ENCODE measurements at regions of chr7 and their contacts with region 1.

Region 1: GRCh38 chr7:51034521-51035264 is 252.0 kb upstream of the GRB10 start:
- DNase-seq: no peak
- H3K4me3 ChIP-seq: no peak overlapping the region
- H3K27ac ChIP-seq: no peak overlapping the region
- H3K4me1 ChIP-seq: no peaks in the 10 kb centered on the region
- H3K27me3 ChIP-seq: no peaks in the 10 kb centered on the region
- CTCF ChIP-seq: no peak
- POLR2A ChIP-seq: no peak

Region 2: GRCh38 chr7:50138101-50138500 is 896.6 kb before region 1 on chr7:
- intact Hi-C with region 1: no loop called
- DNase-seq: no peak
- H3K4me3 ChIP-seq: no peak overlapping the region
- H3K27ac ChIP-seq: no peak overlapping the region
- H3K4me1 ChIP-seq: no peaks in the 10 kb centered on the region
- H3K27me3 ChIP-seq: no peaks in the 10 kb centered on the region
- CTCF ChIP-seq: no peak
- POLR2A ChIP-seq: no peak

Region 3: GRCh38 chr7:51162724-51163329 is 128.1 kb after region 1 on chr7:
- intact Hi-C with region 1: no loop called
- DNase-seq: peak; percentile 73 to 92 (median 82)
- H3K4me3 ChIP-seq: no peak overlapping the region
- H3K27ac ChIP-seq: no peak overlapping the region
- H3K4me1 ChIP-seq: no peaks in the 10 kb centered on the region
- H3K27me3 ChIP-seq: no peaks in the 10 kb centered on the region
- CTCF ChIP-seq: peak; percentile 70 to 87 (median 74)
- POLR2A ChIP-seq: no peak

Region 4: DNA sequence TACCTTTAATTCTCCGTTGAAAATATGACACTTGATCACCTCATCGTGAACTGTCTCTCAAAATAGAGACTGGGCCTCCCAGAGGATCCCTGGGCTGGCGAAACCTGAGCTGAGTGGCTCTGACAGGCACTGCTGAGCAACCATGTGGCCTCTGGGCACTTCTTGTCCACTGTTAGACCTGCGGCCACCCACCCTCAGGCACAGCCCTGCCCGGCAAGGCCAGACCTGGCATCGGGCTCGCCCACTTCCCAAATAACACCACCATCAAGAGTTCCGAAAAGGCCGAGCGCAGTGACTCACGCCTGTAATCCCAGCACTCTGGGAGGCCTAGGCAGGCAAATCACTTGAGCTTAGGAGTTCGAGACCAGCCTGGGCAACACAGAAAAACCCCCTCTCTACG is 199.4 kb after region 1 on chr7:
- intact Hi-C with region 1: loop called in 1 of 2 experiments (anchors 10 kb)
- DNase-seq: peak in 1 of 7 donors; percentile 39
- H3K4me3 ChIP-seq: no peak overlapping the region
- H3K27ac ChIP-seq: no peak overlapping the region
- H3K4me1 ChIP-seq: no peaks in the 10 kb centered on the region
- H3K27me3 ChIP-seq: no peaks in the 10 kb centered on the region
- CTCF ChIP-seq: no peak
- POLR2A ChIP-seq: no peak

Measured in adrenal gland (tissue), 19 donors.